ENCODE measurements at regions of chr10 and their contacts with region 1.

Region 1: DNA sequence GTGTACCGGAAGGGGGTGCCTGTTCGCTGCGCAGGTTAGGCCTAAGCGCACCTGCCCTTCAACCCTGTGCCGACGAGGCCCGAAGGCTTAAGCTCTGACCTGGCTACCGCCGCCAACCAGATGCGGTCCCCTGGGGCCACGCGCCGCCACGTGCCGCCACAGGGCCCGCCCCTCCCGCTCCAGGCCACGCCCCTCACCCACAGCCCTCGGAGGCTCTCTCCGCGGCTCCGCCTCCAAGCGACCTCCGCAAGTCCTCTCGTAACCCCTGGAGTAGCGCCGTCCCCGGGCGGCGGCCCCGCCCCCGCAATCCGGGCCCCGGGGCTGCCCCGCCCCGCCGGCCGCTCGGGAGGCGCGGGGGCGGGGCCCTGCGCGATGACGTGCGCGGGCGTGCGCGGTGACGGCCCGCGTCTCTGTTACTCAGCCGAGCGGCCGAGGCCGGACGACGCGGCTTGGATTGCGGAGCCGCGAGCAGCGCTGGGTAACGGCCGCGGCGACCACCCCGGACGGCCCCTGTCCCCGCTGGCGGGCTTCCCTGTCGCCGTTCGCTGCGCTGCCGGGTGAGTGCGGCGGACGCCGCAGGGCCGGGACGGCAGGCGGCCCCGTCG is at the start of gene MAPK8:
- DNase-seq: peak; percentile 89 to 94 (median 93)
- ATAC-seq: peak; percentile 94
- H3K4me3 ChIP-seq: peak within 1 kb of the TSS; percentile 58
- H3K4me3 Mint-ChIP-seq: peak within 1 kb of the TSS; percentile 75 to 90 (median 86)
- H3K27ac ChIP-seq: peak within 1 kb of the TSS; percentile 93
- H3K27ac Mint-ChIP-seq: peak within 1 kb of the TSS; percentile 50 to 93 (median 83)
- H3K4me1 ChIP-seq: peaks cover 12 to 15% of the 10 kb centered on the region in 2 donors
- H3K4me1 Mint-ChIP-seq: peaks cover 21 to 42% (median 32%) of the 10 kb centered on the region in 7 donors
- H3K27me3 ChIP-seq: no peaks in the 10 kb centered on the region
- H3K27me3 Mint-ChIP-seq: peaks cover 0 to 2% (median 0%) of the 10 kb centered on the region in 5 donors
- total RNA-seq, gene MAPK8: 33.6 to 63.9 (median 45.2) TPM

Region 2: DNA sequence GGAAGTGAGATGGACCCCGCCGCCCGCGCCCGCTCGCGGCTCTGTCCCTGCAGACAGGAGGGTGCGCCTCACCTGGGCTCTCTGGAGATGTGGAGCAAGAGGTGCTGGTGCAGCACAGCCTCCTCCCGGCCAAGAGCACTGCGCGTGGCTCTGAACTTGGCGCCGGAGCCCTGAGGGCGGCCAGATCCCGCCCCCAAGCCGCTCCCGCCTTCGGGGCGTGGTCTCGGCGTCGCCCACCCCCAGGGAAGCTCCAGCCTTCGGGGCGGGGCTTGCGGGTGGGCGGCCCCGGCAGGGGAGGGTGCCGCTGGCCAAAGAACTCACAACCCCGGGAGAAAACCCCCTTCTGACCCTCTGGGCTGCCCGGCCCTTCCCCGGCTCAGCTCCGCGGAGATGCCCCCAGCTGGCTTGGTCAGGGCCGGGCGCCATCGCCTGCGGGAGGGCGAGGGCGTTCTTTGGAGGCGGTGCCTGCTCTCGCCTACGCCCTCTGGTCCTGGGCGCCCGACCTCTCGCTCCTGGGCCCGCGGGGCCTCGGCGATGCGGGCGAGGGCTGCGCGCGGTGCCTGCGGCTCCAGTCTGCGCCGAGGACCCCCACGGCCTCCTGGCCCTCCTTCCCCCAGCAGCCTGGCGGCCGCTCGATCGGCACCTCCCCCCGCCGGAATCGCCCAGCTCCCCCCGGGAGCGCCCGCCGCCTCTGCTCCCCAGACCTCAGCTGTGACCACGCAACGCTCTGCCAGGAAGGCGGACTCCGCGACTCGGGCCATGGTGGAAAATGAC is 922.0 kb before region 1 on chr10 and contains the start of gene ZNF488:
- CTCF ChIA-PET with region 1: no interaction called
- POLR2A ChIA-PET with region 1: no interaction called
- intact Hi-C with region 1: loop called in 1 of 2 experiments (anchors 5 kb)
- DNase-seq: peak; percentile 48 to 81 (median 71)
- ATAC-seq: peak; percentile 93
- H3K4me3 ChIP-seq: peak within 1 kb of the TSS; percentile 60
- H3K4me3 Mint-ChIP-seq: peak within 1 kb of the TSS; percentile 88 to 97 (median 94)
- H3K27ac ChIP-seq: peak within 1 kb of the TSS; percentile 33
- H3K27ac Mint-ChIP-seq: peak within 1 kb of the TSS in 5 of 9 donors; percentile 9 to 74 (median 65)
- H3K4me1 ChIP-seq: peaks cover 0 to 3% of the 10 kb centered on the region in 2 donors
- H3K4me1 Mint-ChIP-seq: peaks cover 10 to 17% (median 12%) of the 10 kb centered on the region in 7 donors
- H3K27me3 ChIP-seq: no peaks in the 10 kb centered on the region
- H3K27me3 Mint-ChIP-seq: peaks cover 35 to 64% (median 51%) of the 10 kb centered on the region in 5 donors
- total RNA-seq, gene ZNF488: not detected

Region 3: DNA sequence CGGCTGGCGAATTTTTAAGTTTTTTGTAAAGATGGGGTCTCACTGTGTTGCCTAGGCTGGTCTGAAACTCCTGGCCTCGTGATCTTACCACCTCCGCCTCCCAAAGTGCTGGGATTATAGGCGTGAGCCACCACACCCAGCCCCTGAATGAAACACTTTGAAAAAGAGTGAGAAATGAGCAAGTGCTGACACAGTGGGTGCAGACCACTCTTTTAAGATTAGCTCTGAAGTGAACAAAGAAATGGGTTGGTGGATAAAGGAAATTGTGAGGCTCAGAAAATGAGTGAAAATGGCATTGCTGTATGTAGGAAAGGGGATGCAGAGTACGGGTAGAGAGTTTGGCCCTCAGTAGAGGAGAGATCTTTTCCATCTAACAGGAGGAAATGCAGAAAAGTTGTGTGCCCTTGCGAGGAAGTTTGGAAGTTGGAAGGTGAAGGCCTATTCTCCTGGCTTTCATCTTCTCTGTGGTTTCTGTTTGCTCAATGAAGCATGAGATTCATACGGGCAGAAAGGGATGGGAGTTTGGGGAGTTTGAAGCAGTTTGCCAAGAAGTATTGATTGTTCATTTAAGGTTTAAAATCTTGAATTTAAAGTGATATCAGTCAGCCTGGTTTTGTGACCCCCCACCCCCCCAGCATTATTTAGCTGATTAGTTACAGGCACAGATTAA is 11.1 kb after region 1 on chr10:
- CTCF ChIA-PET with region 1: no interaction called
- POLR2A ChIA-PET with region 1: interaction called, 3 read pairs
- intact Hi-C with region 1: loop called in 1 of 2 experiments (anchors 2 kb)
- DNase-seq: no peak
- ATAC-seq: no peak
- H3K4me3 ChIP-seq: no peak overlapping the region
- H3K4me3 Mint-ChIP-seq: no peak overlapping the region
- H3K27ac ChIP-seq: no peak overlapping the region
- H3K27ac Mint-ChIP-seq: no peak overlapping the region
- H3K4me1 ChIP-seq: peaks cover 0 to 12% of the 10 kb centered on the region in 2 donors
- H3K4me1 Mint-ChIP-seq: peaks cover under 1 to 48% (median 36%) of the 10 kb centered on the region in 7 donors
- H3K27me3 ChIP-seq: no peaks in the 10 kb centered on the region
- H3K27me3 Mint-ChIP-seq: no peaks in the 10 kb centered on the region

Region 4: DNA sequence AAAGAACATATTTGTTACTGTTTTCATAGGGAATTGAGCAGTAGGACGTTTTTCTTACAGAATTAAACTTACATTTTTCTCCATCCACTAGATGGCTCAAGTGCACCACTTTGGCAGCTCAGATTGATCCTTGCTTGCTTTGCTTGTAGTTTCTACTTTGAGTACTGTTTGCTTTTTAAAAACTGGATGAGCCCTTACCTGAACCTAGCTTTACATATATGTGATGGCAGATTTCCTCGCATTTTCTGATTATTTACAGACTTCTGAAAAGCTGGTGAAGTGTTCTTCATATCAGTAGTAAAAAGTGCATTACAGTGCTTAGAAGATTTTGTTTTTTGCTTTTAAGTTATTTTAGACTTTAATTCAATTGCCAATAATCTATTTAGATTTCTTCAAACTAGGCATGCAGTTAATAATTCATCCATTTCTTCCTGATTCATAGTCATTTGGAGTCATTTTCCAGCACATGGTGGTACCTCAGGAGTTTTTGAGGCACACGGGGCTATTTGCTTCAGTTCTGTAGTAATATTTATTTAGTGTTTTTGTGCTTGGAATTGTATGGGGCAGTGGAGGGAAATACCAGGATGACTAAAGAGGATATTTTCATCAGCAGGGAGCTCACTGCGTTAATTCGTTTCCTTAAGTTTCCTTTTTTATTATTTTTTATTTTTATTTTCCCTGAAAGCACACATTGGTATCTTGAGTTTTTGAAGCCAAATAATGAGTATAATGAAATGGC is 57.4 kb after region 1 on chr10:
- CTCF ChIA-PET with region 1: interaction called, 3 read pairs
- POLR2A ChIA-PET with region 1: no interaction called
- intact Hi-C with region 1: loop called in 1 of 2 experiments (anchors 2 kb)
- DNase-seq: peak in 6 of 9 donors; percentile 7 to 45 (median 37)
- ATAC-seq: peak; percentile 51
- H3K4me3 ChIP-seq: no peak overlapping the region
- H3K4me3 Mint-ChIP-seq: no peak overlapping the region
- H3K27ac ChIP-seq: no peak overlapping the region
- H3K27ac Mint-ChIP-seq: no peak overlapping the region
- H3K4me1 ChIP-seq: no peaks in the 10 kb centered on the region
- H3K4me1 Mint-ChIP-seq: peaks cover 4 to 59% (median 49%) of the 10 kb centered on the region in 7 donors
- H3K27me3 ChIP-seq: no peaks in the 10 kb centered on the region
- H3K27me3 Mint-ChIP-seq: no peaks in the 10 kb centered on the region

Region 5: DNA sequence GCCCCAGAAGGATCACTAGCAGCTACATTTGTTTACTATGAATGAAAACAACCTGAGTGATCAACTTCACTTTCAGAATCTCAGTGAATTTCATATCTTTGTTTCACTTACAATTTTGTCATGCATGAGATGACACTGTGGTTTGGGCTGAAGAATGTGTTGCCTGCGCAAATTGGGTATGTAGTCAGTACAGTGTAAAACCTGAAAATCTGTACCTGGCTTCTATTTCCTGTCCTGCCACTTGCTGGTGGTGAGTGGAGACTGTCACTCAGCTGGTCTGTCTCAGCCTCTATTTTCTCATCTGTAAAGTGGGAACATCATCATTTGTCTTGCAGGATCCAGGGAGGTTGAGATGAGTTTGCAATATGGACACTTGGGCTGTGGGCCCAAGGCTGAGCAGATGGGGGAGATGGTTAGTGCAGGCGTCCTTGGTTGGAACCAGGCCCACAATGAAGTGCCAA is 496.3 kb after region 1 on chr10:
- CTCF ChIA-PET with region 1: no interaction called
- POLR2A ChIA-PET with region 1: no interaction called
- intact Hi-C with region 1: loop called in 1 of 2 experiments (anchors 5 kb)
- DNase-seq: peak in 1 of 9 donors; percentile 17
- ATAC-seq: no peak
- H3K4me3 ChIP-seq: no peak overlapping the region
- H3K4me3 Mint-ChIP-seq: peak overlapping the region in 5 of 10 donors; percentile 4 to 49 (median 21)
- H3K27ac ChIP-seq: no peak overlapping the region
- H3K27ac Mint-ChIP-seq: peak overlapping the region in 7 of 9 donors; percentile 6 to 87 (median 75)
- H3K4me1 ChIP-seq: peaks cover 0 to 66% of the 10 kb centered on the region in 2 donors
- H3K4me1 Mint-ChIP-seq: peaks cover 20 to 82% (median 75%) of the 10 kb centered on the region in 7 donors
- H3K27me3 ChIP-seq: no peaks in the 10 kb centered on the region
- H3K27me3 Mint-ChIP-seq: peaks cover 0 to 6% (median 0%) of the 10 kb centered on the region in 5 donors

Region 6: GRCh38 chr10:49187950-49188761 is 881.8 kb after region 1 on chr10 and contains the start of gene TMEM273:
- CTCF ChIA-PET with region 1: no interaction called
- POLR2A ChIA-PET with region 1: no interaction called
- intact Hi-C with region 1: loop called in 1 of 2 experiments (anchors 5 kb)
- DNase-seq: peak in 1 of 9 donors; percentile 24
- ATAC-seq: peak; percentile 76
- H3K4me3 ChIP-seq: no peak within 1 kb of the TSS
- H3K4me3 Mint-ChIP-seq: peak within 1 kb of the TSS in 2 of 10 donors; percentile 51 to 77
- H3K27ac ChIP-seq: no peak within 1 kb of the TSS
- H3K27ac Mint-ChIP-seq: peak within 1 kb of the TSS in 1 of 9 donors; percentile 58
- H3K4me1 ChIP-seq: peaks cover 0 to 12% of the 10 kb centered on the region in 2 donors
- H3K4me1 Mint-ChIP-seq: peaks cover 0 to 62% (median 5%) of the 10 kb centered on the region in 7 donors
- H3K27me3 ChIP-seq: peaks cover 0 to 5% of the 10 kb centered on the region in 2 donors
- H3K27me3 Mint-ChIP-seq: peaks cover 11 to 54% (median 46%) of the 10 kb centered on the region in 5 donors
- total RNA-seq, gene TMEM273: 1.1 to 20.2 (median 1.8) TPM

Region 7: DNA sequence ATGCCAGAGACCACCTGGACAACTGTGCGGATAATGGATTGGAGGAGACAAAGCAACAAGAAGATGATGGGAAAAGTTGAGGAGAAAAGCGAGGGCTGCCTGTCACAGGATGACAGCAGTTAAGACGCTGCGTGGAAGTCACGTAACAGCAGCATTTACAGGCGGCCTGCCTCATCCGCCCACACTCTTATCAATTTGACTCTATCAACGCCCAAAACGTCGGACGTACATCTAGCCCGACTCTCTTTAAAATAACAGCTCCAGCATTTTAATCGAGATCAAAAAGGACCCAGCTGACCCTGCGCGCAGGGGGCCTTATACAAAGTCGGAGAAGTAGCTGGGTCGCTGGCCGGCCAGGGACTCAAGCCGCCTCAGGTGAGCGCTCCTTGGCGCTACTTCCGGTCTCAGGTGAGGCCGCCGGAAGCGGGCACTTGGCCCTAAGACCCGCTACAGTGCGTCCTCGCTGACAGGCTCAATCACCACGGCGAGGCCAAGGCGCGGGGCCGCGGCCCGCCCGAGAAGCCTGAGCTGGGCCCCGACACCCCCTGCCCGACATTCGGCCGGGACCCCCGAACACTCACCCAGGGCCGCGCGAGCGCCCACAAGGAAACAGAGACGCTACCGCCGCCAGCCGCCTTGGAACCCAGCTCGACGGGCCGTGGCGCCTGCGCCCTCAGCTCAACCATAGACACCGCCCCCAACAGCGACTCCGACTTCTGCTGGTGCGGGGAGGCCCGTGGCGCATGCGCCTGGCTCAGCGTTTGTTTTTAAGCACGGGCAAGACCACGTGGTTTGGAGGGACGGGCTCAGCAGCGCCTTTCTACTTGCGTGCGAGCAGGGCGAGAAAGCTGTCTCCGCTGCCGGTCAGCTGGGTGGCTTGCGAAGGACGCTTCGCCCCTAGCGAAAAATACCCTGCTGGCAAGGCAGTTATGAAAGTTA is 1232.3 kb after region 1 on chr10 and contains the start of gene ERCC6:
- CTCF ChIA-PET with region 1: no interaction called
- POLR2A ChIA-PET with region 1: no interaction called
- intact Hi-C with region 1: loop called (anchors 1 to 2 kb)
- DNase-seq: peak; percentile 89 to 95 (median 93)
- ATAC-seq: peak; percentile 97
- H3K4me3 ChIP-seq: peak within 1 kb of the TSS; percentile 81
- H3K4me3 Mint-ChIP-seq: peak within 1 kb of the TSS; percentile 89 to 98 (median 93)
- H3K27ac ChIP-seq: peak within 1 kb of the TSS; percentile 77
- H3K27ac Mint-ChIP-seq: peak within 1 kb of the TSS; percentile 89 to 98 (median 93)
- H3K4me1 ChIP-seq: peaks cover 10 to 14% of the 10 kb centered on the region in 2 donors
- H3K4me1 Mint-ChIP-seq: peaks cover 32 to 52% (median 45%) of the 10 kb centered on the region in 7 donors
- H3K27me3 ChIP-seq: no peaks in the 10 kb centered on the region
- H3K27me3 Mint-ChIP-seq: peaks cover 2 to 25% (median 16%) of the 10 kb centered on the region in 5 donors
- total RNA-seq, gene ERCC6: 23.0 to 50.7 (median 45.2) TPM

Measured in naive thymus-derived CD4-positive, alpha-beta T cell (primary cell).